ENCODE measurements at regions of chr1 and their contacts with region 1.

Region 1: GRCh38 chr1:212256369-212256768 is 28.8 kb upstream of the PPP2R5A start:
- DNase-seq: peak in 4 of 5 donors; percentile 27 to 67 (median 60)
- H3K4me3 ChIP-seq: peak overlapping the region; percentile 10
- H3K4me3 Mint-ChIP-seq: peak overlapping the region; percentile 22 to 80 (median 74)
- H3K27ac ChIP-seq: no peak overlapping the region
- H3K27ac Mint-ChIP-seq: peak overlapping the region; percentile 65 to 97 (median 88)
- H3K4me1 ChIP-seq: peaks cover 65% of the 10 kb centered on the region
- H3K4me1 Mint-ChIP-seq: peaks cover 61 to 85% (median 84%) of the 10 kb centered on the region in 3 donors
- H3K27me3 ChIP-seq: no peaks in the 10 kb centered on the region
- H3K27me3 Mint-ChIP-seq: no peaks in the 10 kb centered on the region

Region 2: GRCh38 chr1:212284744-212285684 is 28.6 kb after region 1 on chr1 and contains the start of gene PPP2R5A:
- CTCF ChIA-PET with region 1: interaction called, 4 read pairs
- POLR2A ChIA-PET with region 1: interaction called, 13 read pairs
- DNase-seq: peak; percentile 97 to 99 (median 99)
- H3K4me3 ChIP-seq: peak within 1 kb of the TSS; percentile 98
- H3K4me3 Mint-ChIP-seq: peak within 1 kb of the TSS; percentile 96 to 100 (median 99)
- H3K27ac ChIP-seq: peak within 1 kb of the TSS; percentile 97
- H3K27ac Mint-ChIP-seq: peak within 1 kb of the TSS; percentile 91 to 100 (median 98)
- H3K4me1 ChIP-seq: peaks cover 33% of the 10 kb centered on the region
- H3K4me1 Mint-ChIP-seq: peaks cover 34 to 53% (median 45%) of the 10 kb centered on the region in 3 donors
- H3K27me3 ChIP-seq: no peaks in the 10 kb centered on the region
- H3K27me3 Mint-ChIP-seq: no peaks in the 10 kb centered on the region
- total RNA-seq, gene PPP2R5A: 46.1 to 46.9 TPM

Measured in CD8-positive, alpha-beta memory T cell (primary cell).